ENCODE measurements at regions of chr2 and their contacts with region 1.

Region 1: GRCh38 chr2:3780477-3781402 is 77.4 kb downstream of the DCDC2C start:
- DNase-seq: peak; percentile 73
- ATAC-seq: peak; percentile 95
- H3K4me3 ChIP-seq: no peak overlapping the region
- H3K27ac ChIP-seq: 0 out of 2 replicates have a peak overlapping the region, but pooled peaks have one; percentile 20
- H3K4me1 ChIP-seq: peaks cover 6% of the 10 kb centered on the region
- H3K27me3 ChIP-seq: no peaks in the 10 kb centered on the region
- CTCF ChIP-seq: peak; percentile 71
- POLR2A ChIP-seq: no peak
- RAD21 ChIP-seq: peak; percentile 65

Region 2: DNA sequence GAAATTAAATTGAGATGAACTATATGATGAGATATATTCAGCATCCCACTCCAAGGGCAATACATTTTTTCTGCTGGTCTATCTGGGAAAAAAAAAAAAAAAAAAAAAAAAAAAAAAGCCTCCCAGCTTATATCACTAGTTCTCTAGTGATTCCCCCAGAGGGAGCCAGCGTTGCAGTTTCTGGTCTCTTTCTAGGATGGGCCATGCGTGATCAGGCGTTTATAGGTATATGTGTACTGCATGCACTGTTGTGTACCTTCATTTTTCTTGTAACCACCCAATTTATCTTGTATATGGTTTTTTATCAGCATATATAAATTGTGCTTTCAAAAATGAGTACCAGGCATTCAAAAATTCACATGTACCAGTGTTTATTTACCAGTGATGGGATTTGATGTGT is 42.3 kb before region 1 on chr2:
- CTCF ChIA-PET with region 1: interaction called, 11 read pairs
- POLR2A ChIA-PET with region 1: no interaction called
- dilution Hi-C with region 1: no loop called
- in situ Hi-C with region 1: no loop called
- intact Hi-C with region 1: loop called (anchors 1 kb)
- DNase-seq: peak; percentile 54
- ATAC-seq: peak; percentile 96
- H3K4me3 ChIP-seq: no peak overlapping the region
- H3K27ac ChIP-seq: no peak overlapping the region
- H3K4me1 ChIP-seq: no peaks in the 10 kb centered on the region
- H3K27me3 ChIP-seq: peaks cover 14% of the 10 kb centered on the region
- CTCF ChIP-seq: peak; percentile 61
- POLR2A ChIP-seq: no peak
- RAD21 ChIP-seq: peak; percentile 74

Region 3: GRCh38 chr2:3768960-3769765 is 11.6 kb before region 1 on chr2:
- CTCF ChIA-PET with region 1: interaction called, 18 read pairs
- POLR2A ChIA-PET with region 1: no interaction called
- dilution Hi-C with region 1: no loop called
- in situ Hi-C with region 1: no loop called
- intact Hi-C with region 1: no loop called
- DNase-seq: no peak
- ATAC-seq: peak; percentile 65
- H3K4me3 ChIP-seq: no peak overlapping the region
- H3K27ac ChIP-seq: peak overlapping the region; percentile 25; the same call in 1 of the 2 replicates
- H3K4me1 ChIP-seq: peaks cover 4% of the 10 kb centered on the region; the same call in 1 of the 2 replicates
- H3K27me3 ChIP-seq: no peaks in the 10 kb centered on the region
- CTCF ChIP-seq: no peak
- POLR2A ChIP-seq: no peak
- RAD21 ChIP-seq: no peak

Region 4: DNA sequence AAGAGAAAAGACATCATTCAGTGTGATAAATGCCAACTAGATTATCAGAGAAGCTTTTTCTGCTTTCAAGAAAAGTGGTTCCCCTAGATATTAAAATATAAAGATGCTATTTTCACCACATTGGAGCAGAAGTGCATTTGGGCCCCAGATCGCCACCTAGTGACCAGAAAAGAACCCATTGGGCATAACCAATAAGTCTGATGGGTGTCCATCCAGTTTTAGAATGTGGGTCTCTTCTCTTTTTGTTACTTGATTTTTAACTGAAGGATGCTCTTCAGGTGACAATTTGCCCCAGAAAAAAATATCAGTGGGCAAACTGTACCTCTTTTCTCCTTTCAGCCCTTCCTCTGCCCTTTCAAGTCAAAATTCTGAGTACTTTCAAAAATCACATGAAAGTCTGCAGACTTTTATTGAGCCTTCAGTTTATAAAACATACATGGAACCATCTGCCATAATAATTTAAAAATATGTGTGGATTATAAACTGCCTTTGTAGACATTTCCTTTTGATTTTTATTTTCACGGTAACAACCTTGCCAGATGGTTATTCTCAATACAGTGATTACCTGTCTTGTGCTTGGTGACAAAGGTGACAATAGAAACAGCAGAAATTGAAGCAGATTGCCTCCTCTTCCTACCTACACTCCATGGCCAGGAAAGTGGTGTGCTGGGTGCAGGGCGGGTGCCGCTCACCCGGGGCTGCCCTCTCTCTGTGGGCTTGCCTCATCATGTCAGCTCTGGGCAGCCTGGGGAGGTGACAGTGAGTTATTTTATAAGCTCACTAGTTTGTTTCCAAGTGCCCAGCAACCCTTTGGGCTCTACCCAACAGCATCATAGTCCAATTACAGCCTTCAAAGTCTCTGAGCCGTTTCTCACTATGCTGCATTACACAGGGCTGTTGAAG is 47.2 kb after region 1 on chr2:
- CTCF ChIA-PET with region 1: interaction called, 8 read pairs
- POLR2A ChIA-PET with region 1: interaction called, 4 read pairs
- dilution Hi-C with region 1: no loop called
- in situ Hi-C with region 1: no loop called
- intact Hi-C with region 1: loop called (anchors 2 kb)
- DNase-seq: peak; percentile 36
- ATAC-seq: peak; percentile 82
- H3K4me3 ChIP-seq: no peak overlapping the region
- H3K27ac ChIP-seq: no peak overlapping the region
- H3K4me1 ChIP-seq: no peaks in the 10 kb centered on the region
- H3K27me3 ChIP-seq: peaks cover 6% of the 10 kb centered on the region
- CTCF ChIP-seq: peak; percentile 71
- POLR2A ChIP-seq: no peak
- RAD21 ChIP-seq: peak; percentile 64